AG04449 (cell line): ENCODE measurements at regions of chr13 and their contacts with region 1.

Region 1: GRCh38 chr13:79423801-79424642 is 18.0 kb upstream of the RBM26 start:
- DNase-seq: no peak
- H3K4me3 ChIP-seq: no peak overlapping the region
- CTCF ChIP-seq: peak; percentile 32

Region 2: DNA sequence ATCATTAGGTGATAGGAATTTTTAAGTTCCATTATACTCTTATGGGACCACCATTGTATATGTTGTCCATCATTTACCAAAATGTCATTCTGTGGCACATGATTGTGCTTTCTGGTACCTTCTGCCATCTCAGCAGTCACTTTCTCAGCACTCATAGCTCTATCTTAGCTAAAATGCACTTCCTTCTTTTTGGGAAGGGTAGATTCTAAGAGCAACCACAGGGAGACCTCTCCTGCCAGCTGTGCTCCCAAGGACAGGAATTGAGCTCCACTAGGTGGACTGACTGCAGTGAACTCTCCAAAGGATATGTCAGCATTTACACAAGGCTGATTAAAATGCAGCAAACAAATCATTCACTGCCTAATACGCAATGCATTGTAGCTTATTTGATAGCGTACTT is 673.3 kb before region 1 on chr13:
- CTCF ChIA-PET with region 1: no interaction called
- POLR2A ChIA-PET with region 1: no interaction called
- DNase-seq: no peak
- H3K4me3 ChIP-seq: no peak overlapping the region
- CTCF ChIP-seq: no peak

Region 3: GRCh38 chr13:79413521-79413920 is 10.5 kb before region 1 on chr13:
- CTCF ChIA-PET with region 1: interaction called, 45 read pairs
- POLR2A ChIA-PET with region 1: no interaction called
- DNase-seq: no peak
- H3K4me3 ChIP-seq: no peak overlapping the region
- CTCF ChIP-seq: no peak

Region 4: GRCh38 chr13:79440958-79441528 is 17.0 kb after region 1 on chr13:
- CTCF ChIA-PET with region 1: interaction called, 39 read pairs
- POLR2A ChIA-PET with region 1: no interaction called
- DNase-seq: no peak
- H3K4me3 ChIP-seq: no peak overlapping the region
- CTCF ChIP-seq: no peak

Region 5: GRCh38 chr13:79496188-79496587 is 72.2 kb after region 1 on chr13:
- CTCF ChIA-PET with region 1: interaction called, 15 read pairs
- POLR2A ChIA-PET with region 1: no interaction called
- DNase-seq: no peak
- H3K4me3 ChIP-seq: no peak overlapping the region
- CTCF ChIP-seq: no peak

Region 6: DNA sequence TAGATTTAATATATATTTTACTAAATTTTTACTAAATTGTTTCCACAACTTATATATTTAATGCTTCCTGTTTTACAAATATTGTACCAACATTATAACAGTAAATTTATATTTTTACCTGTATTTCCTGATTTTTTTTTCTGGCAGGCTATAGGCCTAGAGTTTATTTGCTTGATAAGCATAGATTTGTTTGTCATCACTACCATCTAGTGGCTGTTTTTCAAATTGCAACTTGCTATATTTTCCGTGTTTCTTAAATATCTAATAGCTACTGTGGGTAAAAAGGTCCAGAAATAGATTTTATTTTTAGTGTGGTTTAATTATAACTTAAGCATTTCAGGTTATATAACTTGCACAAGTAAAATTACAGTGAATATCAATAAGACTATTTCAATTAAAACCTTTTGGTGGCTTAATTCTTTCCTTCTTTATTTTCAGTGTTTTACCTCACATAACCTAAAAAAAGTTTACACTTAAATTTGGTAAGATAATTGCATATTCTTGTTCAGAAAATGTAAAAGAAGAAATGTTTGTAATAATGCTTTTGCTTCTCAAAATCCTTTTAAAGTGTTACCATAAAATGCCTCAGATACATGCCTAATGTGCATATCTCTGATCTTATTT is 117.5 kb after region 1 on chr13:
- CTCF ChIA-PET with region 1: interaction called, 293 read pairs
- POLR2A ChIA-PET with region 1: interaction called, 3 read pairs
- DNase-seq: no peak
- H3K4me3 ChIP-seq: no peak overlapping the region
- CTCF ChIP-seq: peak; percentile 24